Dendritic cell treated with granulocyte-macrophage colony-stimulating factor and Interleukin-4, amounts not matched to agents 40 ng/mL and 50 ng/mL, for 4 days (primary cell): ENCODE measurements at regions of chr10 and their contacts with region 1.

Region 1: GRCh38 chr10:124164264-124164663 is 70.9 kb upstream of the CHST15 start:
- H3K4me3 Mint-ChIP-seq: no peak overlapping the region
- H3K27ac Mint-ChIP-seq: no peak overlapping the region
- H3K4me1 Mint-ChIP-seq: peaks cover 4% of the 10 kb centered on the region
- H3K27me3 Mint-ChIP-seq: peaks cover 41% of the 10 kb centered on the region

Region 2: DNA sequence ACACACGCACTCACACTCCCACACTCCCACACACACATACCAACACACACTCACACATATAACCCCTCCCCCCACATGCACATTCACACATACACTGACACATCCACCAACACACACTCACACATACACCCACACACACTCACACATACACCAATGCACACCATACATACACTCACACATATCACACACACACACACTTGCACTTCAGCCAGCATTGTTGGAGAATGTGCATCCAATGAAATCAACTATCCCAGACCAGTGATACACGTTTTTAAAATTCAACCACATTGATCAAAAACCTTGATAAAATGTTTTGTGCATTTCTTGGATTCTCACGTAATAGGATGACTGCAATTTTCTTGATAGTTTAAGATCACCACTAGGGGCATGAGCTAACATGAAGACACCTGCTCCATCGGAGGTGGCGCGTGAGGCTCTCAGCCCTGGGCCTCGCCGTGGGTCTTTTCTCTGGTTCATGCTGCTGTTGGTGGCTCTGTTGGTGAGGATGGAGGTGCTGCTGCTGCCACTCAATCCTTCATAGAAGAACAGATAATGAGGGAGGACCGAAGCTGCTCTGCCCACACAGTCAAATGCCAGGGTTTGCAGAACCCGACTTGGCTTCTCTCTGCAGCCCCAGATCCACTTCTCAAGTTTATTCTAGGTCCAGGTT is 38.7 kb before region 1 on chr10:
- intact Hi-C with region 1: loop called (anchors 5 kb)
- H3K4me3 Mint-ChIP-seq: no peak overlapping the region
- H3K27ac Mint-ChIP-seq: no peak overlapping the region
- H3K4me1 Mint-ChIP-seq: peaks cover 23% of the 10 kb centered on the region
- H3K27me3 Mint-ChIP-seq: peaks cover 19% of the 10 kb centered on the region